Heart right ventricle (tissue), 16 donors: ENCODE measurements at regions of chr18 and their contacts with region 1.

Region 1: DNA sequence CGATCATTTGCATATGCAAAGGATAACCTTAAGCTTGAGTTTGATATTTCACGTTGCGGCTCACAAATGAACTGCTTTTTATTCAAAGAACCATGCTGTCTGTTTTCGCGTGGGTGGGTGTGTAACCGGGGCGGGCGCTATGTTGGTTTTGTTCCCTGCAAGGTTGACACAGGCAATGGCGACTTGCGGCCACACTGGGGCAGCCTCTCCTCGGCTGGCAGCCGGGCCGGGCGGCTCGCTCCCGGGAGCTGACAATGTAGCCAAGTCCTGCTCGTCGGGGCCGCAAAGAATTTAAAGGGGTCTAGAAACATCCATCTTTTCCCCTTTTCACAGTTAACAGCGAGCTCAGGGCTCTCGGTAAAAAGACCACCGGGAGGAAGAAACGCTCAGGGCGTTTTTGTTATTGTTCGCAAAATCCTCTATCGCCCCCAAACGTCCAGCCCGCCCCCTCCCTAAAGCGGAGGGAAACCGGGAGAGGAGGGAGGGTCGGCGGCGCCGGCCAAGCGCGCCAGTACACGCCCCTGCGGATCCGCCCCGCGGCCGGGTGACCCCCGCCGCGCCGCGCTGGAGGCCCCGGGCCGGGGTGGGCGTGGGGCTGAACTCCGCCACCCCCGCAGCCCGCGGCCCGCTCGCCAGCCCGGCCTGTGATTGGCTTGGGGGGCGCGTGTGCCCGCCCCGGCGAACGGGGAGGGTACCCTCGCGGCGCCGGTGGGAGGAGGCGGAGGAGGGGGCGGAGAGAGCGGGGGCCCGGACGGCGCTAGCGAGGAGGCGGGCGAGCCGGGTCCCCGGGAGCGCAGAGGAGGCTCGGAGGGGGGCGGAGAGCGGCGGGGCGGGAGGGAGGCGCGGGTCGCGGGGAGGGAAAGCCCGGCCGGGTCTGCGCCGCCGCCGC is at the start of gene NEDD4L:
- DNase-seq: peak; percentile 79 to 81
- ATAC-seq: peak; percentile 87 to 95 (median 91)
- H3K4me3 ChIP-seq: peak within 1 kb of the TSS; percentile 71 to 92 (median 86)
- H3K27ac ChIP-seq: peak within 1 kb of the TSS; percentile 45 to 88 (median 76)
- H3K4me1 ChIP-seq: peaks cover 4 to 30% (median 17%) of the 10 kb centered on the region in 9 donors
- H3K27me3 ChIP-seq: peaks cover 0 to 27% (median 0%) of the 10 kb centered on the region in 7 donors
- CTCF ChIP-seq: peak; percentile 73 to 91 (median 86)
- total RNA-seq, gene NEDD4L: 37.1 to 67.1 (median 50.2) TPM

Region 2: DNA sequence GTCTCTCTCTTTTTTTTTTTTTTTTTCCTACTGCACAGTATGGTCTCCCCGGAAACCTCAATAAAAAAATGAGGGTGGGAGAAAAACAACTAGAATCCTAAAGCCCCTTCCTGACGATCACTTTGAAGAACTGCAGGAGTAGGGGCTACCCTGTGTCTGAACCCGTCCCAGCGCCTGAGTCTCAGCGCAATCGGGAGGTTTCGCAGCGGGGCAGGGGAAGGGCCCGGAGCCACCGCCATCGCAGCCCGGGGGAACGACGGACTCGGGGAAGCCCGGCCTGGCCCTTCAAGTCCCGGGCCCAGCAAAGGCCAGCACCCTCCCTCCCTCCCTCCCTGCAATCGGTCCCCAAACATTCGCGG is 422.5 kb before region 1 on chr18:
- intact Hi-C with region 1: loop called in 2 of 10 experiments (anchors 5 to 10 kb)
- DNase-seq: no peak
- ATAC-seq: peak; percentile 10 to 66 (median 46)
- H3K4me3 ChIP-seq: peak overlapping the region; percentile 71 to 89 (median 80)
- H3K27ac ChIP-seq: peak overlapping the region; percentile 72 to 95 (median 90)
- H3K4me1 ChIP-seq: peaks cover 0 to 37% (median 19%) of the 10 kb centered on the region in 9 donors
- H3K27me3 ChIP-seq: no peaks in the 10 kb centered on the region
- CTCF ChIP-seq: no peak

Region 3: GRCh38 chr18:57649556-57650500 is 393.9 kb before region 1 on chr18:
- intact Hi-C with region 1: loop called in 1 of 10 experiments (anchors 10 kb)
- DNase-seq: no peak
- ATAC-seq: peak in 5 of 8 donors; percentile 35 to 84 (median 65)
- H3K4me3 ChIP-seq: no peak overlapping the region
- H3K27ac ChIP-seq: peak overlapping the region in 5 of 10 donors; percentile 15 to 72 (median 32)
- H3K4me1 ChIP-seq: peaks cover 0 to 18% (median 0%) of the 10 kb centered on the region in 9 donors
- H3K27me3 ChIP-seq: no peaks in the 10 kb centered on the region
- CTCF ChIP-seq: no peak

Region 4: GRCh38 chr18:57943723-57944122 is 100.0 kb before region 1 on chr18:
- intact Hi-C with region 1: no loop called
- DNase-seq: no peak
- ATAC-seq: no peak
- H3K4me3 ChIP-seq: no peak overlapping the region
- H3K27ac ChIP-seq: no peak overlapping the region
- H3K4me1 ChIP-seq: no peaks in the 10 kb centered on the region
- H3K27me3 ChIP-seq: peaks cover 0 to 5% (median 3%) of the 10 kb centered on the region in 7 donors
- CTCF ChIP-seq: no peak

Region 5: GRCh38 chr18:58117786-58118403 is 74.2 kb after region 1 on chr18:
- intact Hi-C with region 1: loop called in 9 of 10 experiments (anchors 1 to 5 kb)
- DNase-seq: no peak
- ATAC-seq: peak in 7 of 8 donors; percentile 25 to 66 (median 55)
- H3K4me3 ChIP-seq: no peak overlapping the region
- H3K27ac ChIP-seq: no peak overlapping the region
- H3K4me1 ChIP-seq: peaks cover 0 to 8% (median 0%) of the 10 kb centered on the region in 9 donors
- H3K27me3 ChIP-seq: no peaks in the 10 kb centered on the region
- CTCF ChIP-seq: no peak

Region 6: GRCh38 chr18:58314284-58314683 is 270.5 kb after region 1 on chr18:
- intact Hi-C with region 1: loop called in 1 of 10 experiments (anchors 5 kb)
- DNase-seq: peak in 1 of 2 donors; percentile 46
- ATAC-seq: peak; percentile 69 to 80 (median 76)
- H3K4me3 ChIP-seq: no peak overlapping the region
- H3K27ac ChIP-seq: peak overlapping the region; percentile 23 to 79 (median 70)
- H3K4me1 ChIP-seq: peaks cover 19 to 73% (median 49%) of the 10 kb centered on the region in 9 donors
- H3K27me3 ChIP-seq: no peaks in the 10 kb centered on the region
- CTCF ChIP-seq: no peak